ENCODE measurements at regions of chr16 and their contacts with region 1.

Region 1: GRCh38 chr16:50806099-50807062 is 64.5 kb downstream of the CYLD start:
- DNase-seq: peak; percentile 89 to 91 (median 90)
- H3K4me3 ChIP-seq: peak overlapping the region; percentile 23 to 39
- H3K4me3 Mint-ChIP-seq: peak overlapping the region; percentile 72 to 89 (median 82)
- H3K27ac ChIP-seq: no peak overlapping the region
- H3K27ac Mint-ChIP-seq: peak overlapping the region; percentile 81 to 95 (median 90)
- H3K4me1 ChIP-seq: peaks cover 8% of the 10 kb centered on the region
- H3K4me1 Mint-ChIP-seq: peaks cover 10 to 22% (median 16%) of the 10 kb centered on the region in 4 donors
- H3K27me3 ChIP-seq: no peaks in the 10 kb centered on the region
- H3K27me3 Mint-ChIP-seq: peaks cover 0 to 2% of the 10 kb centered on the region in 2 donors

Region 2: DNA sequence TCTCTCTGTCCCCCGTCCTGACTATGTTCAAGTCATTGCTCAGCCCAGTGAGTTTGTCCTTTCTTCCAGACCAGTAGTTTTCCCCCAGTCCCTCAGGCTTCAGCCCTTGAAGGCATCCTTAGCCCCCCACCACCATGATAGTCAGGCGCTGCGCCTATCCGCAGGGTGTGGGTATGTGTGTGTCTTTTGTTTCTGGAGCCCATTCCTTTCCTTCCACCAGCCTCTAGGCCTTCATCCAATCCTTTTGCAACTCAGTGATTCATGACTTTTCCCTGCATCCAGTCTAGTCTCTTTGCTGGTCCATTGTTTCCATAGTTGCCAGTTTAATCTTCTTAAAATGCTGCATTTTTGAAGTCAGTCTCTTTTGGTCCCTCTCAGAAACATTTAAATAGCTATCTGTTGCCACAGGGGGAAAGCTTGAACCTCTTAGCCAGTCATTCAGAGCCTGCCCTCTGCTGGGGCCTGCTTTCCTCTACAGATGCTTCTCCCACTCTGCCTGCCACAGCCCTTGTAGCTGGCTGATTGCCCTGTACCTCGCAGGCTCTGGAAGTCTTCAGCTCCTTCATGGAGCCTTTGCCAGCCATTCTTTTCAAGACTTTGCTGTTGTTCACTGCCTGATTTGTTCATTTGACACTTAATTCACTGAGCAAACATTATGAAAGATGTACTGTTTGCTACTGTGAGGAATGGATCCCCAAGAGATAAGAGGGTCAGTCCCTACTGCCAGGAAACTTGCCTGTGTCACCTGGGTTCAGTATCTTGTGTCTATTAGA is 595.9 kb before region 1 on chr16:
- CTCF ChIA-PET with region 1: interaction called, 63 read pairs
- POLR2A ChIA-PET with region 1: interaction called, 4 read pairs
- intact Hi-C with region 1: loop called (anchors 1 kb)
- DNase-seq: peak; percentile 53 to 63 (median 56)
- H3K4me3 ChIP-seq: no peak overlapping the region
- H3K4me3 Mint-ChIP-seq: no peak overlapping the region
- H3K27ac ChIP-seq: no peak overlapping the region
- H3K27ac Mint-ChIP-seq: peak overlapping the region; percentile 17 to 91 (median 59)
- H3K4me1 ChIP-seq: peaks cover 4% of the 10 kb centered on the region
- H3K4me1 Mint-ChIP-seq: peaks cover 16 to 26% (median 26%) of the 10 kb centered on the region in 4 donors
- H3K27me3 ChIP-seq: no peaks in the 10 kb centered on the region
- H3K27me3 Mint-ChIP-seq: no peaks in the 10 kb centered on the region

Region 3: GRCh38 chr16:50354629-50355456 is 451.5 kb before region 1 on chr16:
- CTCF ChIA-PET with region 1: interaction called, 26 read pairs
- POLR2A ChIA-PET with region 1: interaction called, 4 read pairs
- intact Hi-C with region 1: no loop called
- DNase-seq: peak in 4 of 5 donors; percentile 42 to 61 (median 54)
- H3K4me3 ChIP-seq: no peak overlapping the region
- H3K4me3 Mint-ChIP-seq: no peak overlapping the region
- H3K27ac ChIP-seq: no peak overlapping the region
- H3K27ac Mint-ChIP-seq: peak overlapping the region in 6 of 7 donors; percentile 0 to 89 (median 41)
- H3K4me1 ChIP-seq: peaks cover 3% of the 10 kb centered on the region
- H3K4me1 Mint-ChIP-seq: peaks cover 10 to 36% (median 23%) of the 10 kb centered on the region in 4 donors
- H3K27me3 ChIP-seq: no peaks in the 10 kb centered on the region
- H3K27me3 Mint-ChIP-seq: no peaks in the 10 kb centered on the region

Region 4: GRCh38 chr16:50644729-50645128 is 161.7 kb before region 1 on chr16:
- CTCF ChIA-PET with region 1: interaction called, 11 read pairs
- POLR2A ChIA-PET with region 1: no interaction called
- intact Hi-C with region 1: no loop called
- DNase-seq: peak in 4 of 5 donors; percentile 26 to 40 (median 32)
- H3K4me3 ChIP-seq: no peak overlapping the region
- H3K4me3 Mint-ChIP-seq: no peak overlapping the region
- H3K27ac ChIP-seq: no peak overlapping the region
- H3K27ac Mint-ChIP-seq: peak overlapping the region in 4 of 7 donors; percentile 2 to 62 (median 26)
- H3K4me1 ChIP-seq: no peaks in the 10 kb centered on the region
- H3K4me1 Mint-ChIP-seq: peaks cover 0 to 5% (median 2%) of the 10 kb centered on the region in 4 donors
- H3K27me3 ChIP-seq: no peaks in the 10 kb centered on the region
- H3K27me3 Mint-ChIP-seq: no peaks in the 10 kb centered on the region

Region 5: DNA sequence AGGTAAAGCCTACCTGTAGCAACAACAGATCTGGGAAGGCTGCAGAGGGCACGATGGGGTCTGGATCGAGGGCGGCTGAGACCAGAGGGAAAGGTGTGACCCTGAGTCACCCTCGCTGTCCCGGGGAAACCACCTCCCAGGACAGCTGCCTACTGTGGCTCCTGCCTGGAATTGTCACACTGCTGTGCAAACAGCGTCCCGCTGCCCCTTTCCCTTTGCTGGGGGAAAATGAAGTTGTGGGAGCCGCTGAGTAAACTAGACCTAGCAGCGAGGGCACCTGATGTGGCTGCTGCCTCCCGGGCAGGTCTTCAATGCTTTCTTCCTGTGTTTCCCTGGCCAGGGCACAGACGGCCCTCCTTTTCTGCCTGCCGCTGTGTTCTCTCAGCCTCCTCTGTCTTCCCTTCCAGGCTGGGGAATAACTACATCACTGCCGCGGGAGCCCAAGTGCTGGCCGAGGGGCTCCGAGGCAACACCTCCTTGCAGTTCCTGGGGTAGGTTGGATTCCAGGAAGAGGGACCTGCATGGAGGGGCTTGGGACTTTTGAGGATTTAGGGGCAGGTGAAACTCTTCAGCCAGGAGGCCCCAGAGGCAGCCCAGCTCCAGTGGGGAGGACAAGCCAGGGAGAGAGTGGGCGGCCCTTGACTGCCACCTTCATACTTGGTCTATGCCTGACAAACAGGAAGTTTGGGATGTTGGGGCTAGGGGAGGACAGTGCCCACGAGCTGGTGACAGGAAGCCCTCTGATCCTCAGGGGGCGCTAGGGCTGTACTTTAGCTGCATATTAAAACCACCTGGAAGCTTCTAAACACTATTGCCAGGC is 86.7 kb before region 1 on chr16:
- CTCF ChIA-PET with region 1: interaction called, 55 read pairs
- POLR2A ChIA-PET with region 1: no interaction called
- intact Hi-C with region 1: loop called (anchors 1 kb)
- DNase-seq: no peak
- H3K4me3 ChIP-seq: no peak overlapping the region
- H3K4me3 Mint-ChIP-seq: no peak overlapping the region
- H3K27ac ChIP-seq: no peak overlapping the region
- H3K27ac Mint-ChIP-seq: peak overlapping the region in 3 of 7 donors; percentile 46 to 74 (median 68)
- H3K4me1 ChIP-seq: peaks cover 12% of the 10 kb centered on the region
- H3K4me1 Mint-ChIP-seq: peaks cover 12 to 35% (median 23%) of the 10 kb centered on the region in 4 donors
- H3K27me3 ChIP-seq: no peaks in the 10 kb centered on the region
- H3K27me3 Mint-ChIP-seq: no peaks in the 10 kb centered on the region

Region 6: GRCh38 chr16:50763211-50763610 is 43.2 kb before region 1 on chr16:
- CTCF ChIA-PET with region 1: interaction called, 13 read pairs
- POLR2A ChIA-PET with region 1: interaction called, 3 read pairs
- intact Hi-C with region 1: no loop called
- DNase-seq: no peak
- H3K4me3 ChIP-seq: no peak overlapping the region
- H3K4me3 Mint-ChIP-seq: peak overlapping the region in 7 of 8 donors; percentile 6 to 79 (median 71)
- H3K27ac ChIP-seq: no peak overlapping the region
- H3K27ac Mint-ChIP-seq: peak overlapping the region in 5 of 7 donors; percentile 26 to 77 (median 47)
- H3K4me1 ChIP-seq: peaks cover 99% of the 10 kb centered on the region
- H3K4me1 Mint-ChIP-seq: peaks cover 71 to 97% (median 84%) of the 10 kb centered on the region in 4 donors
- H3K27me3 ChIP-seq: no peaks in the 10 kb centered on the region
- H3K27me3 Mint-ChIP-seq: no peaks in the 10 kb centered on the region

Region 7: DNA sequence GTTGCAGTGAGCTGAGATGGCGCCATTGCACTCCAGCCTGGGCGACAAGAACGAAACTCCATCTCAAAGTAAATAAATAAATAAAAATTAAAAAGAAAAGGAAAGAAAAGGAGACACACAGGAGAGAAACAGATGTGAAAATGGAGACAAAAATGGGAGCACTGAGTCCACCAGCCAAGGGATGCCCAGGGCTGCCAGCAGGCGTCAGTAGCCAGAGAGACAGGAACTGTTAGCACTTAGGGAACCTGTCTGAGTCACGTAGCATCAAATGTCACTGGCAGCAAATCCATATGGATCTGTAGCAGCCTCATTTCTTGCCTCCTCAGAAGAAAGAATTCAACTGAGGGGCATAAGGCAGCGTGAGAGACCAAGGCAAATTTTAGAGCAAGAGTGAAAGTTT is 15.2 kb after region 1 on chr16:
- CTCF ChIA-PET with region 1: interaction called, 10 read pairs
- POLR2A ChIA-PET with region 1: no interaction called
- intact Hi-C with region 1: no loop called
- DNase-seq: no peak
- H3K4me3 ChIP-seq: no peak overlapping the region
- H3K4me3 Mint-ChIP-seq: no peak overlapping the region
- H3K27ac ChIP-seq: no peak overlapping the region
- H3K27ac Mint-ChIP-seq: no peak overlapping the region
- H3K4me1 ChIP-seq: no peaks in the 10 kb centered on the region
- H3K4me1 Mint-ChIP-seq: no peaks in the 10 kb centered on the region
- H3K27me3 ChIP-seq: no peaks in the 10 kb centered on the region
- H3K27me3 Mint-ChIP-seq: peaks cover 9 to 10% of the 10 kb centered on the region in 2 donors

Measured in CD4-positive, alpha-beta memory T cell (primary cell).